ENCODE measurements at regions of chr11 and their contacts with region 1.

Region 1: GRCh38 chr11:59263225-59263894 is 50.6 kb upstream of the MPEG1 start:
- DNase-seq: peak in 7 of 14 experiments; percentile 7 to 50 (median 24)
- ATAC-seq: peak; percentile 43
- H3K4me3 ChIP-seq: no peak overlapping the region
- H3K4me3 Mint-ChIP-seq: no peak overlapping the region
- H3K27ac ChIP-seq: no peak overlapping the region
- H3K27ac Mint-ChIP-seq: no peak overlapping the region
- H3K4me1 ChIP-seq: peaks cover 7% of the 10 kb centered on the region
- H3K4me1 Mint-ChIP-seq: no peaks in the 10 kb centered on the region
- H3K27me3 ChIP-seq: no peaks in the 10 kb centered on the region
- H3K27me3 Mint-ChIP-seq: no peaks in the 10 kb centered on the region
- CTCF ChIP-seq: peak; percentile 29

Region 2: DNA sequence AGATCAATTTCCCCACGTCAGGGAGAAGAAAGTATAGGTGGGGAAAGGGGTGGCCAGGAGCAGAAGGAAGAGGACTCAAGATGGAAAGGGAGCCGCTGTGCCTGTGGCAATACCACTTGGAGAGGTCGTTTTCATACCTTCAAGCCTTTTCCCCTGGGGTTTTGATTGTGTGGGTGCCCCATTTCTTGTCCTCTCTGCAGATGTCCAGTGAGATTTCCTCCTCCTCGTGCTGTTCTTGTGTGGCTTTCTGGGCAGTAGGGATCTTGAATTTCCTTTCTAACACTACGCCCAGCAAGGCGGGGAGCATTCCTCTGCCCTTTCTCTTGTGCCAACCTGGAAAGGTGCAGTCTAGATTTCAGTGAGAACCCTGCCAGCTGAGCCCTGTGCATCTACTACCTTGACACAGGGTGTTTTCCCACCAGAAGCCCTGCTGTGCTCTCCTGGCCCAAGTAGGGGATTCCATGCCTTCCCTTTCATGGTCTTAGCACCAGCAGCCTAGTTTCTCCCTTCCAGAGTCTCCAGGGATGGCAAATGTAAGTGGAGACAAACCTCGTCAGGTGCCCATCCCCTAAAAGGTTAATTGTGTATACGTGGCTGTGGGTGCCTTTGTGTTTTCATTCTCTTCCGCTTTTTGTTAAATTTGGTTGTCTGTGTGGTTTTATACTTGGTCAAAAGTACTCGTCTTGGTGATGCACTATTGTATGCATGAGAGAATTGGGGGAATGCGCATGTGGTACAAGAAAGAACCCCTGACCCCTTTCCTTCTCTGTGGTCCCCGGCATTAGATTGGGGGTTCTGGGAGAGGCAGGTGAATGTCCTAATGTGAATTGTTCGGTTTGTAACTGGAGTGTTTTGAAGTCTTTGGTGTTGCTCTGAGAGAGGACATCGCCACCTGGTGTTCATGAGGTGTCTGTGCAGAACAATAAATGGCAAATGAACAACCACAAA is 20.7 kb after region 1 on chr11:
- CTCF ChIA-PET with region 1: no interaction called
- POLR2A ChIA-PET with region 1: no interaction called
- intact Hi-C with region 1: loop called (anchors 1 kb)
- DNase-seq: peak in 12 of 14 experiments; percentile 10 to 81 (median 38)
- ATAC-seq: peak; percentile 92
- H3K4me3 ChIP-seq: peak overlapping the region; percentile 4
- H3K4me3 Mint-ChIP-seq: peak overlapping the region; percentile 77
- H3K27ac ChIP-seq: no peak overlapping the region
- H3K27ac Mint-ChIP-seq: peak overlapping the region; percentile 6
- H3K4me1 ChIP-seq: peaks cover 15% of the 10 kb centered on the region
- H3K4me1 Mint-ChIP-seq: peaks cover 18% of the 10 kb centered on the region
- H3K27me3 ChIP-seq: no peaks in the 10 kb centered on the region
- H3K27me3 Mint-ChIP-seq: peaks cover 5% of the 10 kb centered on the region
- CTCF ChIP-seq: peak; percentile 82

Region 3: DNA sequence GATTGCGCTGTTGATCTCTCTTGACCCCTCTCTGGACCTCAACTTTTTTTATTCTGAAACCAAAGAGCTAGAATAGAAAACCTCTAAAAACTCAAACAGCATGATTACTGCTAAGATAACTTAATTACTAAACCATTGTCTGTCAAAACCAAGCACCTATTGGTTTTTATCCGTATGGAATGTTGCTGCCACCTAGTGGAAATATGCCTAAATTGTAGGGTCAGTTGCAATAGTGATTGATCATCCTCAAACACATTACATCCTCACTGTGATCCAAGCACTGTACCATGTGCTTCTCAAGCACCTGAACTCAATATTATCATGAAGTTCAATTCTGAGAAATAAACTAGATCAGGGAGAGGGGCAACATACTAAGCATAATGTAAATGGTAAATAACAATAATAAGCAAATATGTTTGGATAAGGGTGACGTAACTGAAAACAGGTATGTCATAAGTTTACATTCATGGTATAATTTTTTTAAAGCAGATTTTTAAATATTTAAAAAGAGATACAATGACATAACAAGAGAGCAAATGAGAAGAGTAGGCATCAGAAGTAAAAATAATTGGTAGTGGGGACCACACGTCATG is 166.7 kb after region 1 on chr11:
- CTCF ChIA-PET with region 1: no interaction called
- POLR2A ChIA-PET with region 1: no interaction called
- intact Hi-C with region 1: loop called in 1 of 2 experiments (anchors 5 kb)
- DNase-seq: peak in 9 of 14 experiments; percentile 2 to 76 (median 20)
- ATAC-seq: peak; percentile 64
- H3K4me3 ChIP-seq: no peak overlapping the region
- H3K4me3 Mint-ChIP-seq: no peak overlapping the region
- H3K27ac ChIP-seq: no peak overlapping the region
- H3K27ac Mint-ChIP-seq: no peak overlapping the region
- H3K4me1 ChIP-seq: no peaks in the 10 kb centered on the region
- H3K4me1 Mint-ChIP-seq: no peaks in the 10 kb centered on the region
- H3K27me3 ChIP-seq: peaks cover 0 to 4% of the 10 kb centered on the region in 2 experiments
- H3K27me3 Mint-ChIP-seq: peaks cover 17% of the 10 kb centered on the region
- CTCF ChIP-seq: peak; percentile 82

Region 4: GRCh38 chr11:59680287-59681154 is 417.2 kb after region 1 on chr11:
- CTCF ChIA-PET with region 1: no interaction called
- POLR2A ChIA-PET with region 1: no interaction called
- intact Hi-C with region 1: loop called in 1 of 2 experiments (anchors 10 kb)
- DNase-seq: peak; percentile 33 to 79 (median 48)
- ATAC-seq: peak; percentile 93
- H3K4me3 ChIP-seq: no peak overlapping the region
- H3K4me3 Mint-ChIP-seq: no peak overlapping the region
- H3K27ac ChIP-seq: no peak overlapping the region
- H3K27ac Mint-ChIP-seq: no peak overlapping the region
- H3K4me1 ChIP-seq: no peaks in the 10 kb centered on the region
- H3K4me1 Mint-ChIP-seq: no peaks in the 10 kb centered on the region
- H3K27me3 ChIP-seq: peaks cover 0 to 8% of the 10 kb centered on the region in 2 experiments
- H3K27me3 Mint-ChIP-seq: peaks cover 28% of the 10 kb centered on the region
- CTCF ChIP-seq: peak; percentile 64

Measured in CD4-positive, alpha-beta T cell (primary cell).